ENCODE measurements at regions of chr17 and their contacts with region 1.

Region 1: GRCh38 chr17:7856883-7857723 is at the start of gene NAA38:
- DNase-seq: peak; percentile 97
- H3K4me3 ChIP-seq: peak within 1 kb of the TSS; percentile 80
- CTCF ChIP-seq: peak; percentile 71

Region 2: GRCh38 chr17:7818746-7819645 is 38.1 kb before region 1 on chr17:
- CTCF ChIA-PET with region 1: interaction called, 17 read pairs
- POLR2A ChIA-PET with region 1: no interaction called
- DNase-seq: no peak
- H3K4me3 ChIP-seq: no peak overlapping the region
- CTCF ChIP-seq: no peak

Region 3: DNA sequence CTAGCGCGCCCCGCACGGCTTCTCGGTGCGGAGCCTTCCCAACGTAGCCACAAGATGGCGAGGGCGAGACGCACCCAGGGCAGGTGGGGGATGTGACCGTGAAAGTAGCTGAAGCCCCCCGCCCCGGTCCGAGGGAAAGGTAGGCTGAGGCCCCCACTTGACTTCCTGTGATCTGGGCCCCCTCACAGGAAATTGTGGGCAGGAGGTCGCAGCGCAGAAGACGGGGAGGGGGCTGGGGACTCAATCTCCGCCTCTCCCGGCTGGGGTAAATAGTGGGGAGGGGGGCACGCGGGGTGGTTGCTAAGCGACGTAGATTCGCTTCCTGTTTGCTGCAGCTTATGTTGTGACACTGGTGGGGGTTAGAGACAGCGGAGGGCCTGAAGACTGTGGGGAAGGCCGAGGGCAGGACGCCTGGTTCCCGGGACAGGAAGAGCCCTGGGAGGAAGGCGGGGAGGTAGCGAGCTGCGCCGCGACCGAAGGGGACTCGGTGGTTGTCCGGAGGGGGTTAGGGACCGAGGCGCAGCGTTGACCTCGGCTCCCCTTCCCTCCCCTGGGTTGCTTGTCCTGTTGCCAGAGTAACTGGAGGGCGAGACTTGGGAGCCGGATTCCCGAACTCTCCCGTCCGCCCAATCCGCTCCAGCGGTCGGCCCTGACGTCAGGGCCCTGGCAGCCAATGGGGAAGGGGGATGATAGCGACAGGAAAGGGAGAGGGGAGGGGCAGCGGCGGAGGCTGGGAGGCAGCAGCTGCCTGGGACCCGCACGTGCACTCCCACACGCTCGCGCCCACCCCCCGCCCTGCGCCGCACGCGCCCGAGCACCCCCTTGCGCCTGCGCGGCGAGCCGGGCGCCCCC is 21.9 kb before region 1 on chr17:
- CTCF ChIA-PET with region 1: interaction called, 40 read pairs
- POLR2A ChIA-PET with region 1: interaction called, 23 read pairs
- DNase-seq: peak; percentile 91
- H3K4me3 ChIP-seq: peak overlapping the region; percentile 83
- CTCF ChIP-seq: peak; percentile 95

Region 4: DNA sequence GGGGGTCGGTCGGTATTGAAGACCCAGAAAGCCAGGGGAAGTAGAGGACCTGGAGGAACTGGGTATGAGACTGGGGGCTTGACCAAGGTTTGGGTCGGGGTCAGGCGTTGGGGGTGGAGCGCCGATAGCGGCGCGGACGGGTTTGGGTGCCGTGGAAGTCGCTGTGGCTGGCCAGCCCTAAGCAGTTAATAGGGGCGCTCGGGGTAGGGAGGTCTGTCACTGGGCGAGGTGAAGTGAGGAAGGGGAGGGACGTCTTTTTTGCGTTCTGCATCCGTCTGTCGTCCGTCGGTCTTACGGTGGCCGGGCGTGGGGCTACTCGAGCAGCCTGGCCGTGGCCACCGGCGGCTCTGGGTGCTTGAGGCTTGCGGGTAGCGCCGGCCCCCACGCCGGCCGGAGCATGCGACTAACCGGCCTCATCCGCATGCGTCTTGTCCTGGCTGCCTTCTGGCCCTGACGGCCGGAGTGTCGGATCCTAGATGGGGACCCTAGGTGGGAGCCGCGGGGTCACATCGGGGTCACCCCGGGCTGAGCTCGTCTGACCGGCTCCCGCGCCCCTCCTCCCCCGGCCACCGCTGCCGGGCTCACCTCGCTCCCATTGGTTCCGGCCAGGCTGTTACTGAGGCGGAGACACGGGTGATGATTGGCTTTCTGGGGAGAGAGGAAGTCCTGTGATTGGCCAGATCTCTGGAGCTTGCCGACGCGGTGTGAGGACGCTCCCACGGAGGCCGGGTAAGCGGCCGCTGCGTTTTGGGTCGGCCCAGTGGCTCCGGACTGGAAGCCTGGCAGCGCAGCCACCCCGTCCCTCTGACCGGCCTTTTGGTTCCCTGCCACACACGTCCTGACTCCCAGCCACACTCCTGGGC is 12.6 kb before region 1 on chr17:
- CTCF ChIA-PET with region 1: interaction called, 16 read pairs
- POLR2A ChIA-PET with region 1: interaction called, 48 read pairs
- DNase-seq: no peak
- H3K4me3 ChIP-seq: peak overlapping the region; percentile 73
- CTCF ChIP-seq: no peak

Region 5: DNA sequence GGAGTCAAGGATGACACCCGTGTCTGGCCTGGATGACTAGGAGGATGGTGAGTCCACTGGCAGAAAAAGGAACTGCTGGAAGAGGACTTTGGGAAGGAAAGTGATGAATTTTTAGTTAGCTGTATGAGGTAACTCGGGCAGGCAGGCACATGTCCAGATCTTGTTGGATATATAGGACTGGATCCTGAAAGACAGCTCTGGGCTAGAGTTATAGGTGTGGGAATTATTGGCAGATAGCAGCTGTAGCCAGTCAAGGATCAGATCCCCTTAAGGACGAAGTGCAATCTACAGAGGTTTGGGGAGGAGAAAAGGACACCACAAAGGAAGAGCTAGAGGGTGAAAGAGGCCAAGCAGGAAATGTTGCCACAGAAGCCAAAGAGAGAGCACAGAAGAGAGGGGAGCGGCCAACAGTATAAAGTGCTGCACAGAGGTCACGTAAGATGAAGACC is 10.8 kb after region 1 on chr17:
- CTCF ChIA-PET with region 1: interaction called, 44 read pairs
- POLR2A ChIA-PET with region 1: interaction called, 4 read pairs
- DNase-seq: no peak
- H3K4me3 ChIP-seq: no peak overlapping the region
- CTCF ChIP-seq: no peak

Measured in AG04449 (cell line).